ENCODE measurements at regions of chr7 and their contacts with region 1.

Region 1: DNA sequence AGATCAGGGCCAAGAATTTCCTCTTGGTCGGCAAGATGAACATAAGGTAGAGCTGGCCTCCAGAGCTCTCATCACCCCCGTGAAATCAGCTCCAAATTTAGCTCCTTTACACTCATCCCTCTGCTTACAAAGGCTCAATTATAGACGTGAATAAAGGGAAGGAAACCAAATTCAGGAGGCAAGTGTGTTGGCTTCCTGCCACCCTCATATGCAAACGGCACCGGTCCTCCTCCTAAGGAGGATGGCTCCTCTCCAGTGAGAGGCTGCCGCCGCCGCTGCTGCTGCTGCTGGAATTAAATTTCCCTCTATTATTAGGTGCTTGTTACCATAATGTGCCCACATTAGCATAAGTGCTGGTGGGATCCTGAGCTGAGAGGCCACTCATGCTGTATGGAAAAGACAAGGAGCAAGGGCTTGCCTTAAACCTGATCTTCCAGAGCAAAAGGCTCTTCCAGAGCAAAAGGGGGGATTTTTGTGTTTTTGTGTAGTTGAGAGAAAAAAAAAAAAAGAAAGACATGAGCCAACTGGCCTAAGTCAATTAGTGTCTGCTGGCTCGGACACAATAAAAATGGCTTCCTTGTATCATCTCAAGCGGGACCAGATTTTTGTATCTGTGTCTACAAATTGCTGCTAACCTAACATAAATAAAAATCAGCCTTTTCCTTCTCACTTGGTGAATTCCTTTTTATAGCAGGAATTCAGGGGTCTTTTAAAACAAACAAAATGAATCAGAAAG is 68.4 kb downstream of the CDHR3 start:
- DNase-seq: no peak
- H3K4me3 ChIP-seq: no peak overlapping the region
- H3K27ac ChIP-seq: no peak overlapping the region
- H3K4me1 ChIP-seq: no peaks in the 10 kb centered on the region
- H3K27me3 ChIP-seq: no peaks in the 10 kb centered on the region
- CTCF ChIP-seq: no peak
- POLR2A ChIP-seq: no peak

Region 2: DNA sequence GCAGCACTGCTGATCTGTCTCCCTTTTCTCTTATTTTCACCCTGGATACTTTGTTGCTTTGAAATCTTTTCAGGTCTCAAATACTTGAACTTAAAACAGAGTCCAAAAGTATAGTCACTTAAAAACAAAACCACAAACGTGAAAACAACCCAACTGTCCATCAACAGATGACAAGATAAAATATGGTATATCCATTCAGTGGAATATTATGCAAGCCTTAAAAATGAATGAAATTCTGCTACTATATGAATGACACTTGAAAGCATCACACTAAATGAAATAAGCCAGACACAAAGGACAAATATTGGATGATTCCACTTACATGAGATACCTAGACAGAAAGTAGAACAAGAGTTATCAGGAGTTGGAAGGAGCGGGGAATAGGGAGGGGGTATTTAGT is 405.5 kb before region 1 on chr7:
- intact Hi-C with region 1: no loop called
- DNase-seq: no peak
- H3K4me3 ChIP-seq: no peak overlapping the region
- H3K27ac ChIP-seq: no peak overlapping the region
- H3K4me1 ChIP-seq: no peaks in the 10 kb centered on the region
- H3K27me3 ChIP-seq: no peaks in the 10 kb centered on the region
- CTCF ChIP-seq: no peak
- POLR2A ChIP-seq: no peak

Region 3: GRCh38 chr7:105652359-105652993 is 379.0 kb before region 1 on chr7:
- intact Hi-C with region 1: loop called (anchors 10 kb)
- DNase-seq: peak; percentile 52 to 73
- H3K4me3 ChIP-seq: no peak overlapping the region
- H3K27ac ChIP-seq: no peak overlapping the region
- H3K4me1 ChIP-seq: no peaks in the 10 kb centered on the region
- H3K27me3 ChIP-seq: no peaks in the 10 kb centered on the region
- CTCF ChIP-seq: peak; percentile 69 to 91 (median 81)
- POLR2A ChIP-seq: no peak

Region 4: DNA sequence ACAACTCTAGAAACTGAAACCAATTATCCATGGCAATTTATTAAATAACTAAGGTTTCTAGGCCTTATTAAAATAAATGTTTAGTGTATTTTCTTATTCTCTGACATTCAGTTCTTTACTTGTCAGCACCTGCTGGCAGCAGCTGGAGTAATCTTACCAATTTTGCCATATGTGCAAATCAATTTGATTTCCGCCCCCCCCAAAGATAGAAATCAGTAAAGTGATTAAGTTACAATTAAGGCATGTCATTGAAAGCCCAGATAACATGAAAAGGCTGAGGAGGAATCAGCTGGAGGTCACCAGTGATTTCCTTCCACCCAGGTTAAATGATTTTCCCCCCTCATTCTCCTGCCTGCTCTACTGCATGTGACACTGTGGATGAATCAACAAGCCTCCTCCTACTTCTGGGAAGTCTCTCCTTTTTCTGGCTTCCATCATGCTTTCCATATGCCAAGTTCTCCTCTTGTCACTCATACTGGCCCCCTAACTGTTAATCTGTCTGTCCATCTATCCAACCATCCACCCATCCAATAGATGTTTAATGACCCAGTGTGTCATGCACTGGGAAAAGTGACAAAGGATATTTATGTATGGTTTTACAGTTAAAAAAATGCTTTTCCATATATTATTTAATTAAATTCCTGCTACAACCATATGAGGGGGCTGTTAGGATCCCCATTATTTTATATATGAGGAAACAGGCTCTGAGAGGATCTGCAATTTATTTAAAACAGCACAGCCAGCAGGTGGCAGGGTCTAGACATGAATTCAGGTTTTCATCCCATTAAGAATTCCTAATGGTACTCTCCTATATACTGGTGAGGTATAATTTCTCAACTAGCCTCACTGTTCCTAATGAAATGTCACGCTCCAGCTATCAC is 271.6 kb before region 1 on chr7:
- intact Hi-C with region 1: loop called (anchors 10 kb)
- DNase-seq: no peak
- H3K4me3 ChIP-seq: no peak overlapping the region
- H3K27ac ChIP-seq: no peak overlapping the region
- H3K4me1 ChIP-seq: no peaks in the 10 kb centered on the region
- H3K27me3 ChIP-seq: no peaks in the 10 kb centered on the region
- CTCF ChIP-seq: peak in 2 of 3 donors; percentile 56 to 61
- POLR2A ChIP-seq: no peak

Region 5: GRCh38 chr7:105963038-105963667 is 68.3 kb before region 1 on chr7 and contains the start of gene CDHR3:
- intact Hi-C with region 1: loop called (anchors 2 kb)
- DNase-seq: no peak
- H3K4me3 ChIP-seq: no peak within 1 kb of the TSS
- H3K27ac ChIP-seq: no peak within 1 kb of the TSS
- H3K4me1 ChIP-seq: no peaks in the 10 kb centered on the region
- H3K27me3 ChIP-seq: no peaks in the 10 kb centered on the region
- CTCF ChIP-seq: no peak
- POLR2A ChIP-seq: no peak
- total RNA-seq, gene CDHR3: 4.6 to 8.8 (median 6.4) TPM

Region 6: DNA sequence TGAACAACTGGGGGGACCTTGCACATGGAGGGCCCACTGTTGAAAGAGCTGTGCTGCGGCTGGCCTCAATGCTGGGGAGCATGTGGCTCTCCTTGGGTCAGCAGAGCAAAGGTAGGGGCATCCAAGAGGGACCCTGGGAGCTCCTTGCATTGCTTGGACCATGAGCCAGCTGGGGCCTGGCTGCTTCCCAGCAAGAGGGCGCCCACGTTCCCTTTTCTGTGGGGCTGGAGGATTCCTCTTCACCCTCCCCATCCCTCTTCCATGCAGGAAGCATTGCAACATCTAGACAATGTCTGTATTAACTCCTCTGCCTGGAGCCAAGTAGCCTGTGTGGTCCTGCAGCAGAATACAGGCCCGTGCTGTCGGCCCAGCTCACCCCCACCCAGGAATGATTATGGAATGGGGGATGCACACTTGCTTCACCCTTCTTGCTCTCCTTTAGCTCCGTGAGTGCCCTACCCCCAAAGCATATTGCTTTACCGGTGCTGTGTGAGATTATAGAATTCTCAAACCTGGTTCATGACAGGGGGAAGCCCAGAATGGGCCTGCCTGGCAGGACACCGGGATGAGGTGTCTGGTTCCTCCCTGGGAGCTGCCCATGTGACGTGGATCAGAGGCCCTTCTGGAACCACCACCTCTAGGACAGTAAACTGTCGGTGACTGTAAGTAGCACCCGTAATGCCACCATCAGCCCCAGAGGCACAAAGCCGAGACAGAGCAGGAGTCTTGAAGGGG is 18.7 kb after region 1 on chr7:
- intact Hi-C with region 1: no loop called
- DNase-seq: no peak
- H3K4me3 ChIP-seq: no peak overlapping the region
- H3K27ac ChIP-seq: peak overlapping the region in 1 of 2 donors; percentile 23
- H3K4me1 ChIP-seq: peaks cover 0 to 8% of the 10 kb centered on the region in 2 donors
- H3K27me3 ChIP-seq: no peaks in the 10 kb centered on the region
- CTCF ChIP-seq: no peak
- POLR2A ChIP-seq: no peak

Region 7: DNA sequence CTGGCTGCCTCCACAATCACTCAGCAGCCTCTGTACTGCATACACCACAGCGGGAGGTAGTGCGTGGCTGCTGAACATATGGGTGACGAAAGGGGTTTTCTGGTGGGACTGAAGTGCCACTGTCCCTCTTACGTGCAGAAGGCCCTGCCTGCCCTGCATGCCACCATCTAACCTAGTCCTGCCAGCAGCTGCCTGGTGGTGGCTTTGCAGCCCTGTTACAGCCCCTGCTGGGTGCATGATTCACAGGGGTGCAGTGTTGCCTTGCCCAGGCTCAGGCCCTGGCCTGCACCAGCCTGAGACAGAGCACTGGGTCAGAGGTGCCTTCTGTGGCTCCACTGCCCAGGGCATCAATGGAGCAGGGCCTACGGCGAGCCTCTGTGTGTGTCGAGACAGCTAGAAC is 30.5 kb after region 1 on chr7:
- intact Hi-C with region 1: loop called (anchors 2 kb)
- DNase-seq: no peak
- H3K4me3 ChIP-seq: no peak overlapping the region
- H3K27ac ChIP-seq: no peak overlapping the region
- H3K4me1 ChIP-seq: peaks cover 0 to 19% of the 10 kb centered on the region in 2 donors
- H3K27me3 ChIP-seq: no peaks in the 10 kb centered on the region
- CTCF ChIP-seq: no peak
- POLR2A ChIP-seq: no peak

Region 8: GRCh38 chr7:107138696-107139420 is 1107.4 kb after region 1 on chr7:
- intact Hi-C with region 1: no loop called
- DNase-seq: no peak
- H3K4me3 ChIP-seq: no peak overlapping the region
- H3K27ac ChIP-seq: no peak overlapping the region
- H3K4me1 ChIP-seq: no peaks in the 10 kb centered on the region
- H3K27me3 ChIP-seq: no peaks in the 10 kb centered on the region
- CTCF ChIP-seq: no peak
- POLR2A ChIP-seq: no peak